ENCODE measurements at regions of chr19 and their contacts with region 1.

Region 1: DNA sequence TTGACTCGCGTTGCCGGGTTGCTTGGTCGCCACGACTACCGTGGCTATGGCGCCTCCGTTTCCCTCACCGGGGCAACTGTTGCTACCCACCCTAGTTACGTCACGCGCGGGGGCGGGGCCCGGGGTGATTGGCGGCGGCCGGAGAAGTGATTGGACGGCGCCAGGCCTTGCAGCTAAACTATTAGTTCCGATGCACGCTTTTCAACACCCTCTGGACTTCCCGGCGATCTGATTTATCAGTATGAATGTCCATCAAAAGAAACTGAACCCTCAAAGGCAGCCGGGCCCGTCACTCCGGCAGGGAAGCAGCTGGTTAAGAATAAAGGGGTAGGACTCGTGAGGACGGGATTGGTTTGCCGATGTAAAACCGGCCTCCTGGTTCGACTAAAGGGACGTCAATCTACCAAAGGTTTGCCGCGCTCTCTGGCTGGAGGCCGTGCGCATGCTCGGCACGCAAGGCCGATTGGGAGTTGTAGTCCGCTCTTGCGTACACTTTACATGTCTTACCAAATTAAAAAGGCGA is at the start of gene RFX1:
- H3K4me3 ChIP-seq: peak within 1 kb of the TSS; percentile 92
- H3K27ac ChIP-seq: peak within 1 kb of the TSS; percentile 89
- H3K4me1 ChIP-seq: no peaks in the 10 kb centered on the region
- CTCF ChIP-seq: no peak

Region 2: GRCh38 chr19:13926715-13927114 is 79.6 kb before region 1 on chr19:
- CTCF ChIA-PET with region 1: no interaction called
- POLR2A ChIA-PET with region 1: no interaction called
- H3K4me3 ChIP-seq: no peak overlapping the region
- H3K27ac ChIP-seq: no peak overlapping the region
- H3K4me1 ChIP-seq: no peaks in the 10 kb centered on the region
- CTCF ChIP-seq: no peak

Region 3: GRCh38 chr19:13969897-13970296 is 36.4 kb before region 1 on chr19:
- CTCF ChIA-PET with region 1: interaction called, 5 read pairs
- POLR2A ChIA-PET with region 1: interaction called, 10 read pairs
- H3K4me3 ChIP-seq: no peak overlapping the region
- H3K27ac ChIP-seq: no peak overlapping the region
- H3K4me1 ChIP-seq: peaks cover 1% of the 10 kb centered on the region
- CTCF ChIP-seq: no peak

Measured in HEK293 (cell line).